ENCODE measurements at regions of chr12 and their contacts with region 1.

Region 1: GRCh38 chr12:46303039-46303666 is 34.3 kb upstream of the SLC38A1 start:
- DNase-seq: peak; percentile 60
- H3K4me3 ChIP-seq: no peak overlapping the region
- H3K27ac ChIP-seq: no peak overlapping the region
- H3K4me1 ChIP-seq: peaks cover 21% of the 10 kb centered on the region
- CTCF ChIP-seq: peak; percentile 92

Region 2: GRCh38 chr12:46124848-46125619 is 178.1 kb before region 1 on chr12:
- CTCF ChIA-PET with region 1: interaction called, 6 read pairs
- POLR2A ChIA-PET with region 1: interaction called, 6 read pairs
- intact Hi-C with region 1: loop called (anchors 5 kb)
- DNase-seq: peak; percentile 84
- H3K4me3 ChIP-seq: no peak overlapping the region
- H3K27ac ChIP-seq: no peak overlapping the region
- H3K4me1 ChIP-seq: peaks cover 6% of the 10 kb centered on the region
- CTCF ChIP-seq: peak; percentile 81

Region 3: DNA sequence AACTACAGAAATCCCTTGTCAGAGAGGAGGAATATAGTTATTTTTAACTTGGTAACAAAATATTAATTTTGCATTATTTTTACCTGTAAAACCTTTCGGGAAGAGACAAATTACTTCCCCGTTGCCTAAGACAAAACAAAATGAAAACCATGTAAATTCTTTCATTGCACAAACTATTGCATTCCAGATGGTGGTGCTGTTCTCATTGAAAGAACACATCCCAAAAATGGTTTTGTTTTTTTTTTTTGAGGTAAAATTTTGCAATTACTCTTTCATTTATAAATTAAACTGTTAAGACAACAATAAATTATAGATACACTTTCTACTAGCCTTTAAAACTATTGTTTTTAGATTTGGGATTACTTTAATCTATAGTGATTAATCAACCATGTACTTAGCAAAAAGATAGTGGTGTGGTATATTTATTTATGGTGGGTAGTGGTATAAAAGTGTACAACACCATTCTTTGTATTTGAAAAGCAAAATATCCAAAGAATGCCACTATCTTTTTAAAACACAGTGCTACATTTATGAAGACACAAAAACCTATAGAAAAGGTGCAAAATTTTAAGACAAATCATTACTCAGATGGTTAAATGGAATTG is 149.8 kb before region 1 on chr12:
- CTCF ChIA-PET with region 1: no interaction called
- POLR2A ChIA-PET with region 1: no interaction called
- intact Hi-C with region 1: loop called (anchors 2 kb)
- DNase-seq: peak; percentile 55
- H3K4me3 ChIP-seq: no peak overlapping the region
- H3K27ac ChIP-seq: no peak overlapping the region
- H3K4me1 ChIP-seq: peaks cover 11% of the 10 kb centered on the region
- CTCF ChIP-seq: peak; percentile 95

Region 4: DNA sequence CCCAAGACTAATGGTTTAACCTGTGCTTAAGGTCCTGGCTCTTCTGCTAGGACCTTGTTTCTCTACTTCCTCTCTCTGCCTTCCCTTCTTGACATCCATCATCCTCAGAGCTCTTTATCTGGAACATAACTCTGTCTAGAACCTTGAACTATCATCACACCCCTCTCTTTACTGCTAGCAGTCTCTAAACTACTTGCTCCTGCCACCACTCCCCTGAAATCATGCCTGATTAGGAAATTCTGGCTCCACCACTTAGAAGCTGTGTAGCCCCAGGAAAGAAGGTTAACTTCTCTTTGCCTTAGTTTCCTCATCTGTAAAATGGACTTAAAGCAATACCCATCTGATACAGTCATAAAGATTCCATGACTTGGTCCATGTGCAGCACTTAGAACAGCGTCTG is 43.4 kb before region 1 on chr12:
- CTCF ChIA-PET with region 1: no interaction called
- POLR2A ChIA-PET with region 1: no interaction called
- intact Hi-C with region 1: no loop called
- DNase-seq: no peak
- H3K4me3 ChIP-seq: no peak overlapping the region
- H3K27ac ChIP-seq: no peak overlapping the region
- H3K4me1 ChIP-seq: peaks cover 26% of the 10 kb centered on the region
- CTCF ChIP-seq: no peak

Region 5: GRCh38 chr12:46404225-46404631 is 101.1 kb after region 1 on chr12:
- CTCF ChIA-PET with region 1: no interaction called
- POLR2A ChIA-PET with region 1: no interaction called
- intact Hi-C with region 1: no loop called
- DNase-seq: no peak
- H3K4me3 ChIP-seq: no peak overlapping the region
- H3K27ac ChIP-seq: no peak overlapping the region
- H3K4me1 ChIP-seq: peaks cover 5% of the 10 kb centered on the region
- CTCF ChIP-seq: no peak

Measured in OCI-LY7 (cell line).